ENCODE measurements at regions of chr4 and their contacts with region 1.

Region 1: GRCh38 chr4:39495454-39496213 is 31.6 kb downstream of the UGDH start:
- DNase-seq: no peak

Region 2: GRCh38 chr4:39255266-39255665 is 240.4 kb before region 1 on chr4:
- intact Hi-C with region 1: no loop called
- DNase-seq: no peak

Region 3: DNA sequence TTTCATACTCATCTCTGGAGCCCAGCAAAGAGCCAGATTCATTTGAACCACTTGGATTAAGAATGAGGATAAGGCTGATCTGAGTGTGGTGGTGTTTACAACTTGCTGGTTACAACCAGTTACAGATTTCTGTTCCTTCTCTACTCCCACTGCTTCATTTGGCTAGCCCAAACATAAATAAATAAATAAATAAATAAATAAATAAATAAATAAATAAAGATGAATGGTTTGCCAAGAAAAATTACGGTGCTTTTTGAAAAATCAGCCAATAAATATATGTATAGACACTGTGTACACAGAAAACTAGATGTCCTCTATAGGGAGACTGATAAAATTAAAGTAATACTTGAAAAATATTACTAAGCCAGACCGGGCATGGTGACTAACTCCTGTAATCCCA is 54.0 kb before region 1 on chr4:
- intact Hi-C with region 1: loop called in 1 of 2 experiments (anchors 2 kb)
- DNase-seq: no peak